Mammary epithelial cell (primary cell): ENCODE measurements at regions of chr11 and their contacts with region 1.

Region 1: GRCh38 chr11:69683764-69684333 is 8.7 kb upstream of the LTO1 start:
- DNase-seq: peak; percentile 30
- H3K4me3 ChIP-seq: no peak overlapping the region
- H3K27ac ChIP-seq: no peak overlapping the region
- H3K4me1 ChIP-seq: peaks cover 11% of the 10 kb centered on the region
- H3K27me3 ChIP-seq: no peaks in the 10 kb centered on the region
- CTCF ChIP-seq: peak; percentile 43 to 71

Region 2: DNA sequence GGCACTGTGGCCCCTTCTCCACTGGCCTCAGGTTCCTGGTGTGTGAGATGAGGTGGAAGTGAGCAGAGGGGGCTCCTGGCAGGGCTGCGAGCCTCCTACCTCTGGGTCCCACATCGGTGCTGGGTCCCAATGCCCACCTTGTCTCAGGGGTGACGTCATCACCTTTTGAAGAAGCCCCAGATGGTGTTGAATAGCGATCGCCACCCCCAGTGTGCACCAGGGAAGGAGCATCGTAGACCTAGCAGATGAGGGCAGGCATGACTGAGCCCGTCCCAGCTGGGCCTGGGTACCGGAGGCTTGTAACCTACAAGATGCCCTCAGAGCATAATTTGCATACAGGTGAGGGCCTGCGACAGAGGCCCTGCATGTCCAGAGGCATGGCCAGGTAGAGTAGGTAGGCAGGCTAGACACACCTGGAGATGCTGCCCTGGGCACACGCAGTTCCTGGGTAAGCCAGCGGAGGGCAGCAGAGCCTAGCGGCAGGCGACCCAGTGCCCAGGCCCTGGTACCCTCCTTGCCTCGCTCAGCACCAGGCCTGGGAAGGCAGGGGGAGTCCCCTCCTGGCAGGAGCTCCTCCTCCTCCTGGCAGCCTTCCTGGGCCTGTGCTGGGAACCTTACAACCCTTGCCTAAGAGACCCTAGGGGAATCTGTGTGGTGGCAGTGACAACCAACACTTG is 582.6 kb before region 1 on chr11:
- CTCF ChIA-PET with region 1: no interaction called
- dilution Hi-C with region 1: no loop called
- in situ Hi-C with region 1: no loop called
- intact Hi-C with region 1: loop called (anchors 1 kb)
- DNase-seq: peak; percentile 74
- H3K4me3 ChIP-seq: no peak overlapping the region
- H3K27ac ChIP-seq: no peak overlapping the region
- H3K4me1 ChIP-seq: peaks cover 3% of the 10 kb centered on the region
- H3K27me3 ChIP-seq: no peaks in the 10 kb centered on the region
- CTCF ChIP-seq: peak; percentile 97 to 100

Region 3: DNA sequence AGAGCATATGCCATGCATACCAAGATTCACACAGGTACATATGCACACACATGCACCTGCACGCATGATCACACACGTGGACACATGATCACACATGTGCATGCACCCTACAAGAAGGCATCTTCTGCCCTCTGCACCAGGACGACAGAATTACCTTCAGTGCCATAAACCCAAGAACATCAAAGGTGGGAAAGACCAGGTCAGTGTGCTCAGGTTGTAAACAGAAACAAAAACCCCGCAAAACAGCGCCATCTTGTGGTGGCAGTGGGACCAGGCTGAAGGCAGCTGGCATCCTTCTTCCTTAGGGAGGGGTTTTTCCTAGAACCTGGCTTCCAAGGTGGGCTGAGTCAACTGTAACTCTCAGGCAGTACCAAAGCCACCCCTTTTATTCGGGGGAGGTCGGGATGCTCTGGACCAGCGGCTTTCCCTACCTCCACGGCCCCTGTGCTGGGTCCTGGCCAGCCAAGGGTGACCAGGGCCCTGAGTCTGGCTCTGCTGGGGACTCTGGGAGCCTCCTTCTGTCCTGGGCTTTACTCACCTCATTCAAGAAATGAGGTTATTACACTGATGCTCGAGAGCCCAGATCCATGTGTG is 204.7 kb after region 1 on chr11:
- CTCF ChIA-PET with region 1: no interaction called
- dilution Hi-C with region 1: no loop called
- in situ Hi-C with region 1: loop called in 1 of 2 experiments (anchors 10 kb)
- intact Hi-C with region 1: loop called (anchors 1 kb)
- DNase-seq: peak; percentile 48
- H3K4me3 ChIP-seq: no peak overlapping the region
- H3K27ac ChIP-seq: no peak overlapping the region
- H3K4me1 ChIP-seq: no peaks in the 10 kb centered on the region
- H3K27me3 ChIP-seq: no peaks in the 10 kb centered on the region
- CTCF ChIP-seq: peak; percentile 94 to 99

Region 4: DNA sequence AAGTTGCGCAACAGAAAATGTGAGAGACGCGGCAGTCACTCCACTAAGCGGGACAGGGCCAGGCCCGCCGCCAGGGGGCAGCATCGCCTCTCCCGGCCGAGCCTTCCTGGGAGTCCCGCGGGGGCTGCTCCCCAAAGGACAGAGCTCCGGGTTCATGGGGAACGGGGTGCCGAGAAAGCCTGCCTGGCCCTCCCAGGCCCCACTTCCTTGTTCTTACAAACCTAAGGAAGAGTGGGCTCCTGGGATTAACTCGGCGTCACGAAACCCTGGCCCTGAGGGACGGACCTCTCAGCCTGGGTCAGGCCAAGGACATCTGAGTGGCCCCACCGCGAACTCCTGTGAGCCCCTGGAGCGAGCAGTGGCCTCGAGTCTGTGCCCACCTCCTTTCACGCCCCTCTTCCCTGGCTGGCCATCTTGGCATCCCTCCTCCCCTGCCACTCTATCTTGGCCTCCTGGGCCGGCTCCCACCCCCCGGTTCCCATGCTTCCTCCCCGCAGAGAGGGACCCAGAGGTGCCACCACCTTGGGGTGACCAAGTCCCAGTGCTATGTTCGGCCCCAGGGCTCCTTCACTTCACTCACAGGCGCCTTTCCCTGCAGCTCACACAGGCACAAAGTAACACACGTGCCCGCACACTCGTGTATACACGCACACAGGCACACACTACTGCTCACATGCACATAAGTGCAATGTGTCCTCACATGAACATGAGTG is 235.2 kb after region 1 on chr11:
- CTCF ChIA-PET with region 1: interaction called, 5 read pairs
- dilution Hi-C with region 1: no loop called
- in situ Hi-C with region 1: loop called in 1 of 2 experiments (anchors 10 kb)
- intact Hi-C with region 1: no loop called
- DNase-seq: peak; percentile 39
- H3K4me3 ChIP-seq: no peak overlapping the region
- H3K27ac ChIP-seq: no peak overlapping the region
- H3K4me1 ChIP-seq: peaks cover 33% of the 10 kb centered on the region
- H3K27me3 ChIP-seq: no peaks in the 10 kb centered on the region
- CTCF ChIP-seq: peak; percentile 79 to 96

Region 5: GRCh38 chr11:70270104-70270876 is 586.4 kb after region 1 on chr11 and contains the start of gene PPFIA1:
- CTCF ChIA-PET with region 1: no interaction called
- dilution Hi-C with region 1: no loop called
- in situ Hi-C with region 1: no loop called
- intact Hi-C with region 1: loop called (anchors 1 kb)
- DNase-seq: peak; percentile 96
- H3K4me3 ChIP-seq: peak within 1 kb of the TSS; percentile 82 to 98 (median 95)
- H3K27ac ChIP-seq: peak within 1 kb of the TSS; percentile 76
- H3K4me1 ChIP-seq: peaks cover 13% of the 10 kb centered on the region
- H3K27me3 ChIP-seq: no peaks in the 10 kb centered on the region
- CTCF ChIP-seq: peak in 1 of 2 donors; percentile 13
- total RNA-seq, gene PPFIA1: 42.5 to 47.1 TPM